ENCODE measurements at regions of chr17 and their contacts with region 1.

Region 1: DNA sequence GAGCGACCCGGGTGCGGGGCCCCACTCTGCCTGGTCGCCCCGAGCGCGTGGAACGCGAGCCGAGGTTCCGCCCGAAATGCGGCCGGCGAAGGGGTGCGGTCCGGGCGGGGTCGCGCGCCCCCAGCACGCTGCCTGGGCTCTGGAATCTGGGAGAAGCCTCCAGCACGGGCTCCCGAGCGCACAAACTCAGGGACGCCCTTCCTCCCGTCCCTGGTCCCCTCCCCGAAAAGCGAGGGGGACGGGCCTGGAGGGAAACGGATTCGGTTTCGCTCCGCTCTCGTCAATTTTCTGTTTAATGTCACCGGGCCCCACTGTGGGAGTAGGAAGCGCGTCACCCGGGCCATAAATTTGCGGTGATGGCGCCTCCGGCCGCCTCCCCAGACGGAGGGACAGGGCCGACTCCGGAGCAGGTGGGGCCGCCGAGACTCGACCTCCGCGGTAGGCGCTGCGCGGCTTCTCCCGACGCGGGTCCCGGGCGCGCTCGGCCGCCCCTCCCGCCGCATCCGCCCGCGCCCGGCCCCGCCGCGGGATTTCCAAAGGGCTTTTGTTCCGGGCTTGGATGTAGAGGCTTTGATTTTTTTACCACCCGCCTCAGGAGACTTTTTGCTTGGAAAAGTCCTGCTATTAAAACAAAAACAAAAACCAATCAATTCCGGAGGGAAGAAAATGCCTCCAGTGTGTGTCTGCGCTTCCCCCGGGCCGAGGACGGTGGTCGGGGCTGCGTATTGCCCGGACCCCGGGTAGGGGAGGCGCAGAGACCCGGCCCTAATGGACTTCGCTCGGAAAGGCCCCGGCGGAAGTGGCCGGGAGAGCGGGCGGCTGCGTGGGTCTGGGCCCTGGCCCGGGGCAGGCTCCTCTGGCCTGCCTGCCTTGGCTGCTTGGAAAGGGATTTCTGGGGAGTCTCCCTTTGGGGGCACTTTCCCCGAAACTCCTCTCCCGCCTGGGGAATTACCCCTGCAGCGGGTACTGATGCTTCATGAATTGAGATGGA is 7.9 kb upstream of the BAHCC1 start:
- DNase-seq: peak; percentile 86
- H3K4me3 ChIP-seq: peak overlapping the region; percentile 62
- H3K27ac ChIP-seq: peak overlapping the region; percentile 92
- H3K4me1 ChIP-seq: peaks cover 61% of the 10 kb centered on the region
- H3K27me3 ChIP-seq: no peaks in the 10 kb centered on the region
- CTCF ChIP-seq: no peak

Region 2: DNA sequence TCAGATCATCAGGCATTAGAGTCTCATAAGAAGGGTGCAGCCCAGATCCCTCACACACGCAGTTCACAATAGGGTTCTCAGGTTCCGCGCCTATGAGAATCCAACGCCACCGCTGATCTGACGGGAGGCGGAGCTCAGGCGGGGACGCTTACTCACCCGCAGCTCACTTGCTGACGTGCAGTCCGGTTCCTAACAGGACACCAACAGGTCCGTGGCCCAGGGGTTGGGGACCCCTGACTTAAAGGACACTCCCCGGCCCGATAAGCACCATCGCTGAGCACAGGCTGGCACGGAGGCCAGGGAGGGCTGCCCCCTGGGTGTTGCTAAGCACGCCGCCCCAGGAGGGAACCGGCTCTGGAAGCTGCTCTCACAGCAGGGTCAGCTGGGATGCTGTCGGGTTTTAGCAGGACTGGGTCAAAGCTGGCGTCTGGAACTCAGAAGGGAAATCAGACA is 22.2 kb before region 1 on chr17:
- CTCF ChIA-PET with region 1: no interaction called
- POLR2A ChIA-PET with region 1: interaction called, 4 read pairs
- intact Hi-C with region 1: loop called (anchors 1 kb)
- DNase-seq: peak; percentile 63
- H3K4me3 ChIP-seq: peak overlapping the region; percentile 14
- H3K27ac ChIP-seq: no peak overlapping the region
- H3K4me1 ChIP-seq: peaks cover 15% of the 10 kb centered on the region
- H3K27me3 ChIP-seq: no peaks in the 10 kb centered on the region
- CTCF ChIP-seq: no peak